Sigmoid colon (tissue), 7 donors: ENCODE measurements at regions of chr6 and their contacts with region 1.

Region 1: DNA sequence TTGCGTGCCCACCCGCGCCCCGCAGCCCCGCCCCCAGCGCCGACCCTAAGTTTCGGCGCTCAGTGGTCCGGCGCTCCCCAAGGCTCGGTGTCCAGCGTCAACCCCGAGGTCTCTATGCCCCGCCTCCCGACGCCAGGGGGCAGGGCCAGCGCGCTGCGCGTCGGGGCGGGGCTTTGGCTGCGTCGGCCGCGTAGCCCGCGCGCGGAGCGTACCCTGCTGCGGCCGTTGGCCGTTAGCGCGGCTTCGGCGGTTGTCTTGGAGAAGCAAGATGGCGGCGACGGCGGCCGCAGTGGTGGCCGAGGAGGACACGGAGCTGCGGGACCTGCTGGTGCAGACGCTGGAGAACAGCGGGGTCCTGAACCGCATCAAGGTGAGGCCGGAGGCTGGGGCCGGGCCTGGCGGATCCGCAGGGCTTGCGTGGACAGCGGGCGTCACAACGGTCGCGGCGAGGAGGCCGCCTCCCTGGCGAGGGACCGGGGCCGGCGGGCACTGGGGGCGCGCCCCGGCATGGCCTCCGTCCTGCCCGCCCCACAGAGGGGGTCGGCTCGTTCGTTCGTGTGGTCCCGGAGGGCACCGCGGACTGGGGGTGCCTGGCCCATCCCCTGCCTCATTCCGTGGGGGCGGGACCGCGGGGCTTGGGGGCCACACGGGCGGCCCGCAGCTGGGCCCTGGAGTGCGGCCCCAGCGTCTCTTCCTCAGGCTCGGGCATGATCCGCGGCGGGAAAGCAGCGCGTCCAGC is at the start of gene CEP43:
- DNase-seq: peak; percentile 97
- H3K4me3 ChIP-seq: peak within 1 kb of the TSS; percentile 81 to 97 (median 92)
- H3K27ac ChIP-seq: peak within 1 kb of the TSS; percentile 75 to 82 (median 79)
- H3K4me1 ChIP-seq: peaks cover 0 to 33% (median 16%) of the 10 kb centered on the region in 4 donors
- H3K27me3 ChIP-seq: no peaks in the 10 kb centered on the region
- CTCF ChIP-seq: no peak
- EP300 ChIP-seq: no peak
- POLR2A ChIP-seq: no peak
- total RNA-seq, gene CEP43: 12.8 to 18.0 (median 15.2) TPM

Region 2: GRCh38 chr6:166627033-166627874 is 372.1 kb before region 1 on chr6 and contains the start of gene RPS6KA2:
- intact Hi-C with region 1: loop called (anchors 10 kb)
- DNase-seq: peak; percentile 100
- H3K4me3 ChIP-seq: peak within 1 kb of the TSS; percentile 52 to 92 (median 85)
- H3K27ac ChIP-seq: peak within 1 kb of the TSS; percentile 89 to 97 (median 93)
- H3K4me1 ChIP-seq: peaks cover 0 to 47% (median 33%) of the 10 kb centered on the region in 4 donors
- H3K27me3 ChIP-seq: no peaks in the 10 kb centered on the region
- CTCF ChIP-seq: no peak
- EP300 ChIP-seq: no peak
- POLR2A ChIP-seq: peak; percentile 82 to 88
- total RNA-seq, gene RPS6KA2: 27.8 to 44.7 (median 32.3) TPM

Region 3: DNA sequence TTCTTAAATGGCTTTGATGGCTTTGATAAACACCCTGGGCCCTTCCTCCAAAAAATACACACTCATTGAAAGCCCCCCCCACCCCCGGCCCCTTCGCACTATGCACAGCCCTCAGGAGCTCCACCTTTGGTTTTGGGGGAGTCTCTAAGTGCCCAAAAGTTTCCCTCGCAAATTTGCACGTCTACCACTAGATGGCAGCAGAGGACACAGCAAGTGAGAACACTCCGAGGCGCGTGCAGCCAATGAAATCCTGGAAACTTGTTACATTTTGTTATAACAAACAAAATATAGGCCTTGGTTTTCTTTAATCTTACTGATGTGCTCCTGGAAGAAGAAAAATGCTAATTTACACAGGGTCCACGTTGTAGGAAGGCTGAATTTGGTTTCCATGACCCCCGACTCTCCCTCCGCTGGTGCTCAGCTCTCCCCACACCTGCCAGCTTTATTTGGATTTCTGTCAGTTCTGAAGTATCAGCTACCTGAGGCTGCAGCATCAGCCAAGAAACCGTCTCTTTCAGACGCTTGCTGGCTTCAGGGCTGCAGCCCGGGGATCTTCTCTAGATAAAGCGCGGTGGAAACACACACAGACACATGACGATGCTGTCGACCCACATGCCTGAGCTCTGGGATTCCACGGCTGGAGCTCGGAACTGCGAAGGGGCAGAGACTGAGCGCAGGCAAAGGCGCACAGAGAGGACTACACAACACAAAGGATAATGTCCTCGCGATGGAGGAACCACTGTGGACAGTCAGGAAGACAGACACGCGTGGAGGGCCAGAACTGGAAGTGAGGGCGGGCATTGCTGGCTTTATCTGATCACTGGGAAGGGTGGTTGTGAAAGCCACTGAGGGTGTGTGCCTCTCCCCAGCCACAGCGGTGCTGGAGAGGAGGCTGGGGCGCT is 223.9 kb before region 1 on chr6:
- intact Hi-C with region 1: loop called (anchors 5 kb)
- DNase-seq: no peak
- H3K4me3 ChIP-seq: peak overlapping the region in 1 of 4 donors; percentile 18
- H3K27ac ChIP-seq: no peak overlapping the region
- H3K4me1 ChIP-seq: no peaks in the 10 kb centered on the region
- H3K27me3 ChIP-seq: no peaks in the 10 kb centered on the region
- CTCF ChIP-seq: peak; percentile 25 to 88 (median 61)
- EP300 ChIP-seq: no peak
- POLR2A ChIP-seq: no peak

Region 4: GRCh38 chr6:166956444-166957086 is 42.7 kb before region 1 on chr6 and contains the start of gene RNASET2:
- intact Hi-C with region 1: loop called (anchors 2 kb)
- DNase-seq: peak; percentile 98
- H3K4me3 ChIP-seq: peak within 1 kb of the TSS; percentile 63 to 97 (median 78)
- H3K27ac ChIP-seq: peak within 1 kb of the TSS; percentile 82 to 90 (median 88)
- H3K4me1 ChIP-seq: peaks cover 0 to 21% (median 17%) of the 10 kb centered on the region in 4 donors
- H3K27me3 ChIP-seq: no peaks in the 10 kb centered on the region
- CTCF ChIP-seq: no peak
- EP300 ChIP-seq: no peak
- POLR2A ChIP-seq: peak; percentile 56 to 84
- total RNA-seq, gene RNASET2: 41.0 to 53.1 (median 42.5) TPM

Region 5: GRCh38 chr6:167119670-167120381 is 120.5 kb after region 1 on chr6:
- intact Hi-C with region 1: loop called (anchors 5 kb)
- DNase-seq: no peak
- H3K4me3 ChIP-seq: no peak overlapping the region
- H3K27ac ChIP-seq: peak overlapping the region in 3 of 4 donors; percentile 46 to 62 (median 62)
- H3K4me1 ChIP-seq: peaks cover 0 to 39% (median 21%) of the 10 kb centered on the region in 4 donors
- H3K27me3 ChIP-seq: no peaks in the 10 kb centered on the region
- CTCF ChIP-seq: no peak
- EP300 ChIP-seq: no peak
- POLR2A ChIP-seq: no peak

Region 6: DNA sequence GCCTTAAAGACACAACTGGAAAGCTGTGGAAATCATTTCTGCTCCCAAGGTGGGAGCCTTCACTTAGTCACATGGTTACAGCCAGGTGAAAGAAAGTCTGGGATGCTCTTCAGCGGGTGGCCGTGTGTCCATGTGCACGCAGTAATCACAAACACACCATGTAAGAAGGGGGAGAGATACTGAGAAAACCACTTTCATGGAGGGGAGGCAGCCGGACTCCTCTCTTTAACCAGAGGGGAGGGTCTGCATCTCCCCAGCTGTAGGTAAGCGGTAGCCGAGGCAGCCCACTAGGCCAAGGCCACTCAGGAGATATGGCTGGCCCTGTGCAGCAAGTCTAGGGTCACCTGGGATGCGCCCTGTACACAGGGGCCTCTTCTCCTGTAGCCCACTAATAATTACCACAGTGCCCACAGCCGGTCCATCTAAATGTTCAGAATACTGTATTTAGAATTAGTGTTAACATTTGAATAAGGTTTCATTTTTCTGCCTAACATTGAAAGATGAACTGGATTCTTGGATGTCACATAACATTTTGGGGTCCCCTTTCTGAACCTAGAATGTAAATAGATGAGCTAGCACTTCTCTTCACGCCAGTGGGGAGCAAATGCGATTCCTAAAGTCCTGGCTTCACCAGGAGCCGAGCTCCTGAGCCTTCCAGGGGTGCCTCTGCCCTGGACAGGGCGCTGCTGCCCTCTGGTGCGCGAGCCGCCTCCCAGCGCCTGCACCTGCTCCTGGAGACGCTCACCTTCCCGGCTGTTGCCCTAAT is 142.5 kb after region 1 on chr6:
- intact Hi-C with region 1: loop called (anchors 5 kb)
- DNase-seq: no peak
- H3K4me3 ChIP-seq: no peak overlapping the region
- H3K27ac ChIP-seq: no peak overlapping the region
- H3K4me1 ChIP-seq: peaks cover 0 to 13% (median 4%) of the 10 kb centered on the region in 4 donors
- H3K27me3 ChIP-seq: no peaks in the 10 kb centered on the region
- CTCF ChIP-seq: peak; percentile 71 to 85 (median 79)
- EP300 ChIP-seq: no peak
- POLR2A ChIP-seq: no peak

Region 7: GRCh38 chr6:167221400-167222201 is 222.3 kb after region 1 on chr6:
- intact Hi-C with region 1: no loop called
- DNase-seq: no peak
- H3K4me3 ChIP-seq: no peak overlapping the region
- H3K27ac ChIP-seq: no peak overlapping the region
- H3K4me1 ChIP-seq: no peaks in the 10 kb centered on the region
- H3K27me3 ChIP-seq: no peaks in the 10 kb centered on the region
- CTCF ChIP-seq: no peak
- EP300 ChIP-seq: no peak
- POLR2A ChIP-seq: no peak